ENCODE measurements at regions of chr1 and their contacts with region 1.

Region 1: GRCh38 chr1:201709564-201710295 is 119.2 kb upstream of the IPO9 start:
- DNase-seq: no peak
- H3K4me3 ChIP-seq: no peak overlapping the region
- H3K27me3 ChIP-seq: no peaks in the 10 kb centered on the region
- CTCF ChIP-seq: peak; percentile 96

Region 2: GRCh38 chr1:201346441-201346869 is 363.3 kb before region 1 on chr1:
- CTCF ChIA-PET with region 1: no interaction called
- POLR2A ChIA-PET with region 1: no interaction called
- DNase-seq: no peak
- H3K4me3 ChIP-seq: no peak overlapping the region
- H3K27me3 ChIP-seq: peaks cover 10% of the 10 kb centered on the region
- CTCF ChIP-seq: peak; percentile 80

Region 3: DNA sequence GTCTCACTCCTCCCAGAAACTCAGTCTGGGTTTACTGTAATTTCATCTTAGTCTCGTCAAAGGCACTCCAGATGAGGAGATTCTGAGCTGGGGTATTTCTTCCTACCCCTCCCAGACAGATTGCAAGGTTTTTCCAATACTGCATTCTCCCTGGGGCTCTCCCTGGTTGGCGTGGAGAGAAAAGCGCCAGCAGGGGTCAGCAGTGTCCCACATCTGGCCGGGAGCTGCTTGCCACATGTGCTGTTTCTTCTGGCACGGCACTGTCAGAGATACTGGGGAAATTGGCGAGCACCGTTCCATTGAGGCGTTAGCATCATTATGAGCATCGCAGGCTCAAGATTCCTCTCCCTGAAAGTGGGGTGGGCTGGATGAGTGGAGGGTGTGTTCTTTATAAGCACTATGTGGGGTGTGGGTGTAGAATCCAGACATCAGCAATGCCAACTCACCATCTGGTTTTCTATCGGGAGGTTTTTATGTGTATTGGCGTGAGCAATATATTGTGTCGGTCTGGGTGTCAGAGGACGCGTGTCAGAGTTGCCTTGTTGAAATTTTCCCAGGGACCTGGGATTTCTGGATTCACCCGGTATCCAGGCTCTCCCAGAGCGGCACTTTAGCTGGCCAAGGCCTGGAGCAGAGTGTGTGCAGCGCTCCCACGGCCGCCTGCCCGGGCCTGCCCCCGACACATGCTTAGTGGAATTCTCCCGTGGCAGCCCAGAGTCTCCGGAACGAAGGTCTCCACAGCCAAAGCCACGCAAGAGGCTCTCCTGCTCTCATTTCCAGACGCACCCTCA is 178.8 kb before region 1 on chr1:
- CTCF ChIA-PET with region 1: interaction called, 135 read pairs
- POLR2A ChIA-PET with region 1: no interaction called
- DNase-seq: peak; percentile 81
- H3K4me3 ChIP-seq: no peak overlapping the region
- H3K27me3 ChIP-seq: no peaks in the 10 kb centered on the region
- CTCF ChIP-seq: peak; percentile 89

Region 4: DNA sequence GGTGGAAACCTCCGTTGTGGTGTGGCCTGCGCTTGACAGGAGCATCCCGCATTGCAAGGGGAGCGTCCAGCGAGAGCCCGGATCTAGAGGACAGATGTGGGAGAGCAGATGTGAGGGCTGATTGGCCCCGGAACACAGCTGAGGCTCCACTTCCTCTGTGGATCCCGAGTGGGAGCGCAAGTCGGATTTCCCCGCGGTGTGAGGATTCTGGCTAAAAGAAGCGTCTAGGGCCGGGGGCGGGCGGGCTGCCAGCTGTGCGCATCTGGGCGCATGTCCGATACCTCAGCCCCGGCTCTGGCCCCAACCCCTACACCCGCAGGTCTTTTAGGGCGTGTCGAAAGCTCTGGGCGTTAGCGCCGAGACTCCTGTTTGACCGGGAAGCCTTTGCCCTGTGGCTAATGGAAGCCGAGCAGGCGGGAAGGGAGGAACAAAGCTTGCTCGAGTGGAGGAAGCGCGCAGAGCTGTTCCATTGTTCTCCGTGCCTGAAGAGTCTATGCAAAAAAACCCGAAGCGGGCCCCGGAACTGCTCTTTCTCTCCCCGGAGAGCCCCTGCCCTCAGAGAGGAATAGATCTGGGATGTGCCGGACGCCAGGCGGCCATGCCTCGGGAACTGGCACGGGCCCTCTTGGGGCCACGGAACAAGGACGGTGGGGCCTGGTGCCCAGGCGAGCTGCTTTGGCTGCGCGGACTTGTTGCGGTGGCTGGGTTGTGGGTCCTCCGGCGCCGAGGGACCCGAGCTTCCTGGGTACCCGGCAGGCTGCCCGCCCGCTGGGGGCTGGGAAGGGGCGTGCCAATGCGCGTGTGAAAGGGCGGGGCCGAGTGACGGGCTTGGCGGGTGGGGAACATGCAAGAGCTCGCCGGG is 59.7 kb before region 1 on chr1:
- CTCF ChIA-PET with region 1: interaction called, 20 read pairs
- POLR2A ChIA-PET with region 1: interaction called, 27 read pairs
- DNase-seq: no peak
- H3K4me3 ChIP-seq: peak overlapping the region; percentile 73
- H3K27me3 ChIP-seq: no peaks in the 10 kb centered on the region
- CTCF ChIP-seq: peak; percentile 27; the same call in 1 of the 2 replicates

Region 5: DNA sequence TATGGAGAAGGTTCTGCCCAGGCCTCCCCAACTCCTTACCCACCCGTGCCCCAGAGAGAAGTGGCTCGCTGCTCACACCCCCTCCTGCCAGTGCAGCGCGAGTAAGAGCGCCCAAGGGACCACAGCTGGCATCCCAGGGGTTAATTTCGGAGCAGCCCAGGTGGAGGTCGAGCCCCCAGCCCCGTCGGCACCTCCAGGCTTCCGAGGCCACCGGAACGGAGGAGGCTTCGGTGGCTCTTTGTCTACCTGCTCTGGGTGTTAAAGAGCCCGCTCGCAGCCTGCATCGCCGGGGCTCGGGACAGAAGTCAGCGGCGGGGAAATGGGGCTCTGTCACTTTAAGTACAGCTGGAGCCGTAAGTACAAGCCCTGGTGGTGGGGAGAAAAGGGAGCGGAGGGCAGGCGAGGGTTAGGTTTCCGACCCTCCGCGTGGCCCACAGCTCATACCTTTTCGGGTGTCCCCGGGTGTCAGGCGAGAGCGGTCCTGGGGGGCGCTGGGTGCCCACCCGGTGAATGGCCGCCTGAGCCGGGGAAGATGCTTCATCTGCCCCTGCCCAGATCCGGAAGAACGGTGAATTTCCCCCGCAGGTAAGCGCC is 29.9 kb after region 1 on chr1:
- CTCF ChIA-PET with region 1: interaction called, 13 read pairs
- POLR2A ChIA-PET with region 1: interaction called, 3 read pairs
- DNase-seq: no peak
- H3K4me3 ChIP-seq: peak overlapping the region; percentile 60
- H3K27me3 ChIP-seq: no peaks in the 10 kb centered on the region
- CTCF ChIP-seq: 0 out of 2 replicates have a peak, but pooled peaks have one; percentile 2

Region 6: DNA sequence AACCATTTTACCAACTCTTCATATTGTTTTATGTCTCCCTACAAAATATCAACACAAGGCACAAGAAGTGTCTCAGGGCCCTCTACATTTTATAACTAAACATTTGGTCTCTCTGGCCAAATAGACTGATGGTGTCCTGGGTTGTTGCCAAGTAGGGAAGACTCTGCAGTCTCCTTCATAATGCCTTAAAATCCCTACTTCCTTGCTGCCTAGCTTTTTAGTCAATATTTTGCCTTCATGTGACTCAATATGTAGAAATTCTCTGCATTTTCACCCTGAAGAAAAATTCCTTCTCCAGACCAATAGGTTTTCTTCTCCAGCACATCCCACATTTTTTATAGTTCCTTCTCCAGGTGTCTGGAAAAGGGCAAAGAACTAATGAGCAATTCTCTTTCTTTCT is 46.7 kb after region 1 on chr1:
- CTCF ChIA-PET with region 1: interaction called, 51 read pairs
- POLR2A ChIA-PET with region 1: interaction called, 6 read pairs
- DNase-seq: peak; percentile 74
- H3K4me3 ChIP-seq: no peak overlapping the region
- H3K27me3 ChIP-seq: no peaks in the 10 kb centered on the region
- CTCF ChIP-seq: no peak

Region 7: GRCh38 chr1:201774224-201774982 is 64.7 kb after region 1 on chr1:
- CTCF ChIA-PET with region 1: interaction called, 15 read pairs
- POLR2A ChIA-PET with region 1: no interaction called
- DNase-seq: no peak
- H3K4me3 ChIP-seq: no peak overlapping the region
- H3K27me3 ChIP-seq: no peaks in the 10 kb centered on the region
- CTCF ChIP-seq: no peak